CD4-positive, alpha-beta T cell (primary cell): ENCODE measurements at regions of chr15 and their contacts with region 1.

Region 1: GRCh38 chr15:51649659-51650521 is 27.3 kb upstream of the DMXL2 start:
- DNase-seq: peak in 11 of 14 experiments; percentile 3 to 85 (median 37)
- ATAC-seq: peak; percentile 81
- H3K4me3 ChIP-seq: no peak overlapping the region
- H3K4me3 Mint-ChIP-seq: no peak overlapping the region
- H3K27ac ChIP-seq: no peak overlapping the region
- H3K27ac Mint-ChIP-seq: no peak overlapping the region
- H3K4me1 ChIP-seq: no peaks in the 10 kb centered on the region
- H3K4me1 Mint-ChIP-seq: no peaks in the 10 kb centered on the region
- H3K27me3 ChIP-seq: no peaks in the 10 kb centered on the region
- H3K27me3 Mint-ChIP-seq: no peaks in the 10 kb centered on the region
- CTCF ChIP-seq: peak; percentile 90

Region 2: DNA sequence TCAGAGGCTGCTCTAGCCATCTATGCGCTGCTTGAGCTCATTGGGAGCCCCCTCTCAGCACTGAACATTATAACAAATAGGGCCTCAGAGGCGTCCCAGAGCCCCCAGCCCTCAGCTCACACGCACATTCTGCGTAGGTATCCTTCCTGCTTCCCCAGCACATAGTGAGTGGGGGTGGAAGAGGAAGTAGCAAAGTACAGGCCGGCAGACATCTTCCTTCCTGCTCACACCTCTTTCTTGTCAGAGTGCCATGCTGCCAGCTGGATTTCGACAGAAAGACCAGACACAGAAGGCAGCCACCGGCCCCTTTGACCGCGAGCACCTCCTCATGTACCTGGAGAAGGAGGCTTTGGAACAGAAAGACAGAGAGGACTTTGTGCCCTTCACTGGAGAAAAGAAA is 118.1 kb after region 1 on chr15:
- CTCF ChIA-PET with region 1: interaction called, 14 read pairs
- POLR2A ChIA-PET with region 1: interaction called, 4 read pairs
- intact Hi-C with region 1: no loop called
- DNase-seq: peak in 4 of 14 experiments; percentile 25 to 40 (median 34)
- ATAC-seq: peak; percentile 78
- H3K4me3 ChIP-seq: no peak overlapping the region
- H3K4me3 Mint-ChIP-seq: no peak overlapping the region
- H3K27ac ChIP-seq: no peak overlapping the region
- H3K27ac Mint-ChIP-seq: peak overlapping the region; percentile 80
- H3K4me1 ChIP-seq: peaks cover 8% of the 10 kb centered on the region
- H3K4me1 Mint-ChIP-seq: peaks cover 16% of the 10 kb centered on the region
- H3K27me3 ChIP-seq: no peaks in the 10 kb centered on the region
- H3K27me3 Mint-ChIP-seq: no peaks in the 10 kb centered on the region
- CTCF ChIP-seq: no peak